Activated CD4-positive, alpha-beta T cell treated with anti-CD3 and anti-CD28 coated beads, Interleukin-2, amount 10 ng/mL, durations not matched to agents 7 days and 5 days (primary cell): ENCODE measurements at regions of chr19 and their contacts with region 1.

Region 1: GRCh38 chr19:43446746-43447489 is 18.5 kb downstream of the LYPD3 start:
- DNase-seq: peak; percentile 85
- H3K4me3 Mint-ChIP-seq: no peak overlapping the region
- H3K27ac Mint-ChIP-seq: no peak overlapping the region
- H3K4me1 Mint-ChIP-seq: peaks cover 39% of the 10 kb centered on the region
- H3K27me3 Mint-ChIP-seq: no peaks in the 10 kb centered on the region

Region 2: DNA sequence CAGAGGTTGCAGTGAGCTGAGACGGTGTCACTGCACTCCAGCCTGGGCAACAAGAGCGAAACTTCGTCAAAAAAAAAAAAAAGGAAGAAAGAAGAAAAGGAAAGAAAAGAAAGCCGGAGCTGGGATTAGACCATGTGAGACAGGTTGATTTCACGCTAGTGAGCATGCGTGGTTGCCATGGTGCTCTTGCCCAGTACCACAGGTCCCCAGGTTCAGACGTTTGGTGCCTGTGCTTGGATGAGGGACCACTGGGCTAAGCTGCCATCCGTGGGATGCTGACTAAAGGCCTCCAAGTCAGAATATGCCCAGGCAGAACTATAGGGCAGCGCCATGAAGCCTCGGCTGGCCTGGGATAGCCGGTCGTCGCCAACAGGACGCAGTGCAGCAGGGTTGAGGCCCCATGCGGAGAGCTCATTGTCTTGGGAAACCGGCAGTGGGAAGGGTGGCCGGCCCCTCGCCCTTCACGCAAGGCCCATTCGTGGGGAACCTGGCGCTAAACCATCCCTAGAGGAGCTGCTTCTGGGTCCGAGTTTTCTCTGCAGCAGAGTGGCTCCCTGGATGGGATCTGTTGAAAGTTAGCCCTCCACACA is 39.4 kb before region 1 on chr19:
- CTCF ChIA-PET with region 1: no interaction called
- POLR2A ChIA-PET with region 1: no interaction called
- DNase-seq: no peak
- H3K4me3 Mint-ChIP-seq: no peak overlapping the region
- H3K27ac Mint-ChIP-seq: no peak overlapping the region
- H3K4me1 Mint-ChIP-seq: no peaks in the 10 kb centered on the region
- H3K27me3 Mint-ChIP-seq: no peaks in the 10 kb centered on the region

Region 3: DNA sequence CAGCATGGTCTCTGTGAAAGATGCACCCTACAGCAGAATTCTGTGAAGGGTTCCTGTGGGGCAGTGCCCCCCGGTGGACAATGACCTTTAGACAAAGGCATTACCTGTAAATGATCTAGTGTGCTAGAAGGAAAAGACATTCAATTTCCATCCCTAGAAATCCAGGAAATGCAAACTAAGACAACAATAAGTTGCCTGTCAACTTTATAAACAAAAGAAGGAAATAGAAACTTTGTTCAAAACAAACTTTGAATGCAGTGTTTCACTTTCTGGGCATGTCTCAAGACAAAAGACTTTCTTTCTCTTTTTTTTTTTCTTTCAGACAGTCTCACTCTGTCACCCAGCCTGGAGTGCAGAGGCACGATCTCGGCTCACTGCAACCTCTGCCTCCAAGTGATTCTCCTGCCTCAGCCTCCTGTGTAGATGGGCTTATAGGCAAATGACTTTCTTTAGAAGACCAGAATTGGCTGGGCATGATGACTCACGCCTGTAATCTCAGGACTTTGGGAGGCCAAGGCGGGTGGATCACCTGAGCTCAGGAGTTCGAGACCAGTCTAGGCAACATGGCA is 16.7 kb before region 1 on chr19:
- CTCF ChIA-PET with region 1: interaction called, 12 read pairs
- POLR2A ChIA-PET with region 1: no interaction called
- DNase-seq: peak; percentile 50
- H3K4me3 Mint-ChIP-seq: no peak overlapping the region
- H3K27ac Mint-ChIP-seq: peak overlapping the region; percentile 88
- H3K4me1 Mint-ChIP-seq: peaks cover 46% of the 10 kb centered on the region
- H3K27me3 Mint-ChIP-seq: no peaks in the 10 kb centered on the region

Region 4: GRCh38 chr19:43457809-43458208 is 10.9 kb after region 1 on chr19:
- CTCF ChIA-PET with region 1: interaction called, 25 read pairs
- POLR2A ChIA-PET with region 1: no interaction called
- DNase-seq: no peak
- H3K4me3 Mint-ChIP-seq: no peak overlapping the region
- H3K27ac Mint-ChIP-seq: no peak overlapping the region
- H3K4me1 Mint-ChIP-seq: peaks cover 11% of the 10 kb centered on the region
- H3K27me3 Mint-ChIP-seq: no peaks in the 10 kb centered on the region

Region 5: GRCh38 chr19:43524922-43525835 is 78.3 kb after region 1 on chr19:
- CTCF ChIA-PET with region 1: interaction called, 41 read pairs
- POLR2A ChIA-PET with region 1: no interaction called
- DNase-seq: peak; percentile 43
- H3K4me3 Mint-ChIP-seq: peak overlapping the region; percentile 95
- H3K27ac Mint-ChIP-seq: peak overlapping the region; percentile 95
- H3K4me1 Mint-ChIP-seq: peaks cover 28% of the 10 kb centered on the region
- H3K27me3 Mint-ChIP-seq: no peaks in the 10 kb centered on the region